Endothelial cell of umbilical vein (primary cell): ENCODE measurements at regions of chr6 and their contacts with region 1.

Region 1: DNA sequence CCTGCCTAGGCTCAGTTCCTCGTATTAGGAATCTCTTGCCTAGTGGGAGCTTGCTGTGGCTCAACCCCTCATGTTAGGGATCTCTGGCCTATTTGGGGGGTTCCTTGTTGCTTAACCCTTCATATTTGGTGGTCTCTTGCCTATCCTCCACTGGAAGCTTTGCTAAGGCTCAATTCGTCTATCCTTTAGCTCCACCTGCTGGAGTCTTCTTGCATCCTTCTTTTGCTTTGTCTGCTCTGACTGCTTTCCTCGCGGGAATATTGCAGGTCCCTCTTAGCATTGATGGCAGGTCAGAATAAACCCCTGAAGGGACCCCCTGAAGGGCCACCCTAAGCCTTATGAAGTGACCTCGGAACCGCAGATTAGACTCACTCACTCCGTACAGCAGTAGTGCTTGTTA is 203.0 kb upstream of the TBX18 start:
- DNase-seq: peak; percentile 75
- H3K4me3 ChIP-seq: no peak overlapping the region
- H3K27ac ChIP-seq: no peak overlapping the region
- H3K4me1 ChIP-seq: no peaks in the 10 kb centered on the region
- H3K27me3 ChIP-seq: no peaks in the 10 kb centered on the region
- CTCF ChIP-seq: peak; percentile 52 to 62
- POLR2A ChIP-seq: no peak

Region 2: GRCh38 chr6:83884523-83884922 is 1082.9 kb before region 1 on chr6:
- CTCF ChIA-PET with region 1: no interaction called
- POLR2A ChIA-PET with region 1: no interaction called
- dilution Hi-C with region 1: no loop called
- intact Hi-C with region 1: loop called (anchors 5 kb)
- DNase-seq: peak; percentile 84
- H3K4me3 ChIP-seq: no peak overlapping the region
- H3K27ac ChIP-seq: no peak overlapping the region
- H3K4me1 ChIP-seq: peaks cover 9% of the 10 kb centered on the region
- H3K27me3 ChIP-seq: no peaks in the 10 kb centered on the region
- CTCF ChIP-seq: peak; percentile 41 to 59
- POLR2A ChIP-seq: no peak

Region 3: GRCh38 chr6:84284428-84285049 is 682.9 kb before region 1 on chr6:
- CTCF ChIA-PET with region 1: interaction called, 4 read pairs
- POLR2A ChIA-PET with region 1: no interaction called
- dilution Hi-C with region 1: no loop called
- intact Hi-C with region 1: loop called (anchors 1 kb)
- DNase-seq: peak; percentile 41
- H3K4me3 ChIP-seq: no peak overlapping the region
- H3K27ac ChIP-seq: no peak overlapping the region
- H3K4me1 ChIP-seq: no peaks in the 10 kb centered on the region
- H3K27me3 ChIP-seq: peaks cover 6 to 13% of the 10 kb centered on the region in 2 experiments
- CTCF ChIP-seq: peak; percentile 37 to 53
- POLR2A ChIP-seq: no peak

Region 4: DNA sequence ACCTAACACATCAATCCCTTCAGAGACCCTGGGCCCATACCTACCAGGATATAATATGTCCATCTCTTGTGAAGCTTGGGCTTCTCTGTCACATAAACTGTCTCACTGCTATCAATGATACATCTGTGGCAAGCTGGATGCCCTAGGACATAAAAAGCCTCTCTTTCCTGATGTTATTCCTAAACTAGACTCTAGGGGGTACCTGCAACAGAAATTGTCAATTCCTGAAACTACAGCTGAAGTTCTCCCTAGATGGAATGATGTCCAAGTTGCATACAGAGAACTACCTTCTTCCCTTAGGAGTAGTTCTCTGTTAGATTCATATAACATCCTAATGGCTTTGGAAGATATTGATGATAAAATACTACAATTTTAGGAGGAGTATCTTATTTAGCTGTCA is 238.8 kb before region 1 on chr6:
- CTCF ChIA-PET with region 1: interaction called, 3 read pairs
- POLR2A ChIA-PET with region 1: no interaction called
- dilution Hi-C with region 1: no loop called
- intact Hi-C with region 1: loop called (anchors 1 kb)
- DNase-seq: peak; percentile 39
- H3K4me3 ChIP-seq: no peak overlapping the region
- H3K27ac ChIP-seq: no peak overlapping the region
- H3K4me1 ChIP-seq: peaks cover 24% of the 10 kb centered on the region
- H3K27me3 ChIP-seq: no peaks in the 10 kb centered on the region
- CTCF ChIP-seq: peak; percentile 19 to 31
- POLR2A ChIP-seq: no peak

Region 5: GRCh38 chr6:85126485-85127167 is 159.2 kb after region 1 on chr6:
- CTCF ChIA-PET with region 1: interaction called, 3 read pairs
- POLR2A ChIA-PET with region 1: no interaction called
- dilution Hi-C with region 1: no loop called
- intact Hi-C with region 1: loop called (anchors 2 kb)
- DNase-seq: peak; percentile 75
- H3K4me3 ChIP-seq: no peak overlapping the region
- H3K27ac ChIP-seq: no peak overlapping the region
- H3K4me1 ChIP-seq: no peaks in the 10 kb centered on the region
- H3K27me3 ChIP-seq: peaks cover 14 to 17% of the 10 kb centered on the region in 2 experiments
- CTCF ChIP-seq: peak; percentile 72 to 89
- POLR2A ChIP-seq: no peak